Natural killer cell (primary cell): ENCODE measurements at regions of chr16 and their contacts with region 1.

Region 1: GRCh38 chr16:88650749-88651275 is at the start of gene CYBA:
- DNase-seq: peak; percentile 87 to 88
- ATAC-seq: peak; percentile 60 to 88 (median 71)
- H3K4me3 ChIP-seq: peak within 1 kb of the TSS; percentile 87
- H3K4me3 Mint-ChIP-seq: peak within 1 kb of the TSS; percentile 95
- H3K27ac ChIP-seq: peak within 1 kb of the TSS; percentile 99
- H3K27ac Mint-ChIP-seq: peak within 1 kb of the TSS; percentile 96 to 99
- H3K4me1 ChIP-seq: peaks cover 92% of the 10 kb centered on the region
- H3K4me1 Mint-ChIP-seq: peaks cover 42 to 69% of the 10 kb centered on the region in 2 donors
- H3K27me3 ChIP-seq: no peaks in the 10 kb centered on the region
- H3K27me3 Mint-ChIP-seq: no peaks in the 10 kb centered on the region
- CTCF ChIP-seq: no peak
- total RNA-seq, gene CYBA: 1,001 to 1,351 (median 1,051) TPM

Region 2: DNA sequence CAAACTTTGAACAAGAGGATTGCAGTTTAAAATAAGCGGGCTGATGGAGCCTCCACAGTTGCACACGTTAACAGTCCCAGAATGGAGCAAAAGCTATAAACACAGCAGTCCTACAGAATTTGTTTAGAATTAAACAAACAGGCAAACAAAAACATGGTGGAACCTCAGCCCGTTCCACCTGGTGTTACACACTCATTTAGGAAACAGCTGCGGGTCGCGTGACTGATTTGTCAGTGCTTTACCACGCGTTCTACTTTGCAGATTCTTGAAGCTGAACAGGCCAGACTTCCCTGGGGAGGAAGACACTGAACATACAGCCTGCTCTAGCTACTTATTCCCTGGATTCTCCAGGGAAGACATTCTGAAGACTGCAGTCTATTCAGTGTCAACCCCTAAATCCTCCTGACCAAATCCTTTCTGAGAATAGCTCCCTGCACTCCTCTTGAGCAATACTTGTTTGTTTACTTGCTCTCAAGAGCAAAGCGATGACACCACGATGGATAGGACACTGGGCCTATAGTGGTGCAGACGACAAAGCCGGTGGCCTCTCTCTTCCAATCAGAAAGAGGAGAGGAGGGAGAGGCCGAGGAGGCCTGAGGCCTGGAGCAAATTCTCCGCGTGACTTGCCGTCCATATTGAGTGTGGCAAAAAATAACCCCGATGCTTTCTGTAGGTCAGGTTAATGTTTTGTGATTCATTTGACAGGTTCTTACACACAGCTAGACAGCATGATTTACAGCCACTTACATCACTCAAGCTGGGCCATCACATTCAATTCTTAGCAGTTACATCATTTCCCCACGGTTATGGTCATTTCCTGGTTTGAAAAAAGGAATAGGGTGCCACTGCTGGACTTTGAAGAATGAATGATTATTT is 1262.6 kb before region 1 on chr16:
- intact Hi-C with region 1: loop called (anchors 5 kb)
- DNase-seq: peak; percentile 79 to 96
- ATAC-seq: peak; percentile 64 to 83 (median 67)
- H3K4me3 ChIP-seq: peak overlapping the region; percentile 9
- H3K4me3 Mint-ChIP-seq: peak overlapping the region; percentile 61
- H3K27ac ChIP-seq: peak overlapping the region; percentile 80
- H3K27ac Mint-ChIP-seq: peak overlapping the region; percentile 95 to 97
- H3K4me1 ChIP-seq: peaks cover 33% of the 10 kb centered on the region
- H3K4me1 Mint-ChIP-seq: peaks cover 39 to 48% of the 10 kb centered on the region in 2 donors
- H3K27me3 ChIP-seq: no peaks in the 10 kb centered on the region
- H3K27me3 Mint-ChIP-seq: no peaks in the 10 kb centered on the region
- CTCF ChIP-seq: no peak

Region 3: GRCh38 chr16:88536971-88537751 is 113.7 kb before region 1 on chr16:
- intact Hi-C with region 1: no loop called
- DNase-seq: peak in 1 of 2 donors; percentile 21
- ATAC-seq: no peak
- H3K4me3 ChIP-seq: no peak overlapping the region
- H3K4me3 Mint-ChIP-seq: no peak overlapping the region
- H3K27ac ChIP-seq: no peak overlapping the region
- H3K27ac Mint-ChIP-seq: peak overlapping the region in 1 of 2 donors; percentile 78
- H3K4me1 ChIP-seq: peaks cover 71% of the 10 kb centered on the region
- H3K4me1 Mint-ChIP-seq: peaks cover 0 to 55% of the 10 kb centered on the region in 2 donors
- H3K27me3 ChIP-seq: no peaks in the 10 kb centered on the region
- H3K27me3 Mint-ChIP-seq: no peaks in the 10 kb centered on the region
- CTCF ChIP-seq: no peak

Region 4: DNA sequence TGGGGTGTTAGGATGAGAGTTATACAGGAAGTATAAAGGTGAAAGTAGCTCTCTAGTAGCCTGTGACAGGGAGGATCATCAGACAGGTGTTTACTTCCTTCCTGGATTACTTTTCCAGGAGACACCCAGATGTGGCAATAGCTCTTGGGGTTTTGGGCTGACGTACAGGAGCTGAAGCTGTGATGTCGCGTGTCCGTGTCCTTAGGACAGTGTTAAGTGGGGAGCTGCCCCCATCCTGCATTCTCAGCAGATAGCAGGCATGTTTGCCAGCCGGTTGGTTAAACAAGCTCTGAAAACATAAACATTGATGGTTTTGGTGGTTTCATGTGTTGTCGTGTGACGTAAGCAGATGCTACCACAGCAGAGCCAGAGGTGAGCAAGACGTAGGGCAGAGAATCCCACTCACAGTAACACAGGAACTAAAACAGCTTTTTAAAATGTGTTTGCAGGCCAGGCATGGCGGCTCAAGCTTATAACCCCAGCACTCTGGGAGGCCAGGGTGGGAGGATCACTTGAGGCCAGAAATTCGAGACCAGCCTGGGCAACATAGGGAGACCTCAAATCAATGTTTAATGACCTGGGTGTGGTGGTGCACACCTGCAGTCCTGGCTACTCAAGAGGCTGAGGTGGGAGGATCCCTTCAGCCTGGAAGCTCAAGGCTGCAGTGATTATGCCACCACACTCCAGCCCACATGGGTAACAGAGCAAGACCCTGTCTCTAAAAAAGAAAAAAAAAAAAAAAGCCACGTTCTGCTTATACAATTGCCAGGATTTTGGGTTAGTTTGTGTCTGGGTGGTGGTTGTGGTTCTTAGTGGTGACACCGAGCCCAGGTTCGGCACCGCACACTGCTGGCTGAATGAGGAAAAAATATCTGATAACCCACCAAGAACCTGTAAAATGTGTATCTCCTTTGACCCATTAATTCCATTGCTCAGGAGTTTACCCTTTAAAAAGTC is 30.7 kb before region 1 on chr16:
- intact Hi-C with region 1: loop called (anchors 1 kb)
- DNase-seq: peak; percentile 78 to 94
- ATAC-seq: peak; percentile 80 to 92 (median 87)
- H3K4me3 ChIP-seq: no peak overlapping the region
- H3K4me3 Mint-ChIP-seq: peak overlapping the region; percentile 77
- H3K27ac ChIP-seq: peak overlapping the region; percentile 93
- H3K27ac Mint-ChIP-seq: peak overlapping the region; percentile 96 to 97
- H3K4me1 ChIP-seq: peaks cover 47% of the 10 kb centered on the region
- H3K4me1 Mint-ChIP-seq: peaks cover 29 to 50% of the 10 kb centered on the region in 2 donors
- H3K27me3 ChIP-seq: no peaks in the 10 kb centered on the region
- H3K27me3 Mint-ChIP-seq: no peaks in the 10 kb centered on the region
- CTCF ChIP-seq: no peak

Region 5: DNA sequence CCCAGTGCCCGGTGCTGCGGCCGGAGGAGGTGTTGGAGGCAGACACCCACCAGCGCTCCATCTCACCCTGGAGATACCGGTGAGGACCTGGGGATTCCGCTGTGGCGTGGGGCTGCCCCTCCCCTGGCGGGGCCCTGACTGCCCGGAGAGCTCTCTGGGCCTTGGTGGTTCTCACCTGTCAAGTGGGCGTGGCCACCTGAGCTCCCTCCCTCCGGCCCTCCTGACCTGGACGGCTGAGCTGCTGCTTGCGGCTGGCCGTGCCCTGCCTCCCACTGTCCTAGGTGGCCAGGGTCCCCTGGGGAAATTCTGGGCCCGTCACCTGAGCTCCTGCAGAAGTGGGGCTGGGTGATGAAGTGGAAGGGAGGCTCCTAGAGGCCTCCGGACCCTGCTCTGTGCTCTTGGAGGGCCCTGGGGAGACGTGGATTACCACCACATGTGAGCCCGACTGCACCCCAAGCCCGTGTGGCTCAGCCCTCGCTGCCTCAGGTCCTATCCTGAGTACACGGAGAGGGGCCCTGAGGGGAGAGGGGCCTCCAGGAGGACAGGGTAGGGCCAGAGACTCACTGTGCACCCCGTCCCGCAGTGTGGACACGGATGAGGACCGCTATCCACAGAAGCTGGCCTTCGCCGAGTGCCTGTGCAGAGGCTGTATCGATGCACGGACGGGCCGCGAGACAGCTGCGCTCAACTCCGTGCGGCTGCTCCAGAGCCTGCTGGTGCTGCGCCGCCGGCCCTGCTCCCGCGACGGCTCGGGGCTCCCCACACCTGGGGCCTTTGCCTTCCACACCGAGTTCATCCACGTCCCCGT is 11.4 kb before region 1 on chr16:
- intact Hi-C with region 1: loop called (anchors 1 kb)
- DNase-seq: peak; percentile 37 to 40
- ATAC-seq: peak in 1 of 3 donors; percentile 7
- H3K4me3 ChIP-seq: no peak overlapping the region
- H3K4me3 Mint-ChIP-seq: peak overlapping the region; percentile 64
- H3K27ac ChIP-seq: no peak overlapping the region
- H3K27ac Mint-ChIP-seq: peak overlapping the region; percentile 72 to 90
- H3K4me1 ChIP-seq: peaks cover 80% of the 10 kb centered on the region
- H3K4me1 Mint-ChIP-seq: peaks cover 31 to 67% of the 10 kb centered on the region in 2 donors
- H3K27me3 ChIP-seq: no peaks in the 10 kb centered on the region
- H3K27me3 Mint-ChIP-seq: peaks cover 0 to 3% of the 10 kb centered on the region in 2 donors
- CTCF ChIP-seq: no peak

Region 6: GRCh38 chr16:88662843-88663606 is 12.2 kb after region 1 on chr16 and contains the start of gene MVD:
- intact Hi-C with region 1: loop called (anchors 1 kb)
- DNase-seq: peak; percentile 95 to 99
- ATAC-seq: peak; percentile 95 to 99 (median 95)
- H3K4me3 ChIP-seq: peak within 1 kb of the TSS; percentile 95
- H3K4me3 Mint-ChIP-seq: peak within 1 kb of the TSS; percentile 97
- H3K27ac ChIP-seq: peak within 1 kb of the TSS; percentile 87
- H3K27ac Mint-ChIP-seq: peak within 1 kb of the TSS; percentile 94 to 99
- H3K4me1 ChIP-seq: peaks cover 20% of the 10 kb centered on the region
- H3K4me1 Mint-ChIP-seq: peaks cover 12 to 28% of the 10 kb centered on the region in 2 donors
- H3K27me3 ChIP-seq: no peaks in the 10 kb centered on the region
- H3K27me3 Mint-ChIP-seq: no peaks in the 10 kb centered on the region
- CTCF ChIP-seq: no peak
- total RNA-seq, gene MVD: 176 to 271 (median 185) TPM

Region 7: DNA sequence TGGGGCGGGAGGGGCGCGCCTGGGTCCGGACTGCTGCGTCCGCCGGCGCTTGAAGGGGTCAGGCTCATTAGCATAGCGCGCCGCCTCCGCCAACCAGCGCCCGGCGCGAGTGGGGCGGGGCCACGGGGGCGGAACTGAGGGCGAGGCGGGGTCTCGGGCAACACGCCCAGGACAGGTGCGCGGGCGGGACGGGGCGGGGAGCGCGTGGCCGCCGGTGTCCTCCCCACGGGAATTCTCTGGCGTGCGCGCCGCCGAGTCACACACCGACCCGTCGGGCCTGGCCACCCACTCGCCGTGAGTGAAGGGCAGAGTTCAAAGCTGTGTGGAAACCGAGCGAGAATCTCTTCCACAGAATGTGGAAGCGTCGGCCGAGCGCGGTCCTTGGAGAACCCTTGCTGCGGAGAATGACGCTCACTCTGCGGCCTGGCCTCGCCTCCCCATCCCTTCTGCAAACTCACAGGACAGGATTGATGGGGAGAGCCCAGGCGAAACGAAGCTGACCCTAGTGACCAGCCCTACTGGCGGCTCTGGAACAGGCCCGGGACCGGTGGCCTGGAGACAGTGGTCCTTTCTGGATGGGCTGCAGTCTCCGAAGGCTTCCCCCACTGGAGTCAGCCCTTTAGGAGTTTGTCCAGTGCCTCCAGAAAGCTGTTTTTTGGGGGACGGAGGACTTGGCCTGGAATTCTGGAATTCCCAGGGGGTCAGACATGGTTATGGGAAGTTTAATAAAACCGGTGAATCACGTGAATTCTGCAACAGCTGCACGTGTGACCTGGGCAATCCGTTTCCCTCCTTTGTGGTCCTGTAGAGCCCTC is 35.8 kb after region 1 on chr16 and contains the start of gene SNAI3:
- intact Hi-C with region 1: loop called (anchors 2 kb)
- DNase-seq: peak; percentile 88 to 89
- ATAC-seq: peak; percentile 86 to 94 (median 93)
- H3K4me3 ChIP-seq: peak within 1 kb of the TSS; percentile 92
- H3K4me3 Mint-ChIP-seq: peak within 1 kb of the TSS; percentile 84
- H3K27ac ChIP-seq: peak within 1 kb of the TSS; percentile 63
- H3K27ac Mint-ChIP-seq: peak within 1 kb of the TSS; percentile 36 to 73
- H3K4me1 ChIP-seq: peaks cover 55% of the 10 kb centered on the region
- H3K4me1 Mint-ChIP-seq: peaks cover 15 to 45% of the 10 kb centered on the region in 2 donors
- H3K27me3 ChIP-seq: no peaks in the 10 kb centered on the region
- H3K27me3 Mint-ChIP-seq: no peaks in the 10 kb centered on the region
- CTCF ChIP-seq: no peak
- total RNA-seq, gene SNAI3: 8.2 to 9.2 (median 8.4) TPM

Region 8: DNA sequence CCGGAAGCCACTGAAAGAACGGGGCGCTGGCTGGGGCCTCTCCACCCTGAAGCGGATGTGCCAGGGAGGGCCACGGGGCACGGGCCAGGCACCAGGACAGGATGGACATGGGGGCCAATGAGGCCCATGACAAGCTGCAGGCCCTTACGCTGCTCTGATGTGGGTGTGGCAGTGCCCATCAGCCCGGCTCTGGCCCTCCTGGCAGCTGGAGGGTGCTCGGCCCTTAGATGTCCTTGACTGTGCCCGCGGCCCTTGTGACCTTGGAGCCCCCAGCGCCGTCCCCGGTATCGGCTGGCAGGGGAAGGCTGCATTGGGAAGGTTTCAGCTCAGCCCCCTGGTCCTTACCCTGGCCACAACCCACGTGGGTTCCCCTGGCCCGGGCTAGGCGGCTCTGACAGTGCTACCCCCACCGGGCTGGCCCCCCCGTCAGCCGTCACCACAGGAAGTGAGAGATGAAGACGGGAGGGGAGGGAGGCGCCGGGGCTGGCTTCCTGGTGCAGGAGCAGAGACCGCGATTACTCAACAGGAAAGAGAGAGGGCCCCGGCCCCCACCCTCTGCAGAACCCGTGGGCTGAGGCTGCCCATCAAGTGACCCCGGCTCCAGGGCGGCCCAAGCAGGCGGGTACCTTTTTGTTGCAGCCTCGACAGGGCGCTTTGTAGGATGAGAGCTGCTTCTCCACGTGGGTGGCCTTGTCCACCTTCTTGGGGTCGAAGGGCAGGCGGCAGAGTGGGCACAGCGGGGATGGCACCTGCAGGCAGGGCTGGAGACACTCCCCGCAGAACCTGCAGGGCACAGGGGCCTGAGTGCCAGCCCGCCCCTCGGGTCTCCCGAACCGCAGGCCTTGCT is 50.0 kb after region 1 on chr16:
- intact Hi-C with region 1: loop called (anchors 2 kb)
- DNase-seq: peak; percentile 95 to 96
- ATAC-seq: peak; percentile 76 to 92 (median 82)
- H3K4me3 ChIP-seq: peak overlapping the region; percentile 67
- H3K4me3 Mint-ChIP-seq: peak overlapping the region; percentile 94
- H3K27ac ChIP-seq: peak overlapping the region; percentile 83
- H3K27ac Mint-ChIP-seq: peak overlapping the region; percentile 89 to 96
- H3K4me1 ChIP-seq: peaks cover 84% of the 10 kb centered on the region
- H3K4me1 Mint-ChIP-seq: peaks cover 53 to 70% of the 10 kb centered on the region in 2 donors
- H3K27me3 ChIP-seq: no peaks in the 10 kb centered on the region
- H3K27me3 Mint-ChIP-seq: no peaks in the 10 kb centered on the region
- CTCF ChIP-seq: no peak

Region 9: GRCh38 chr16:89142478-89143195 is 491.8 kb after region 1 on chr16:
- intact Hi-C with region 1: no loop called
- DNase-seq: no peak
- ATAC-seq: no peak
- H3K4me3 ChIP-seq: no peak overlapping the region
- H3K4me3 Mint-ChIP-seq: no peak overlapping the region
- H3K27ac ChIP-seq: no peak overlapping the region
- H3K27ac Mint-ChIP-seq: no peak overlapping the region
- H3K4me1 ChIP-seq: no peaks in the 10 kb centered on the region
- H3K4me1 Mint-ChIP-seq: no peaks in the 10 kb centered on the region
- H3K27me3 ChIP-seq: no peaks in the 10 kb centered on the region
- H3K27me3 Mint-ChIP-seq: no peaks in the 10 kb centered on the region
- CTCF ChIP-seq: no peak